CD4-positive, alpha-beta T cell (primary cell): ENCODE measurements at regions of chr13 and their contacts with region 1.

Region 1: GRCh38 chr13:98509271-98510155 is 67.4 kb downstream of the STK24 start:
- DNase-seq: peak in 9 of 14 experiments; percentile 15 to 80 (median 36)
- ATAC-seq: peak; percentile 71
- H3K4me3 ChIP-seq: no peak overlapping the region
- H3K4me3 Mint-ChIP-seq: peak overlapping the region; percentile 4
- H3K27ac ChIP-seq: peak overlapping the region in 1 of 2 donors; percentile 9
- H3K27ac Mint-ChIP-seq: peak overlapping the region; percentile 82
- H3K4me1 ChIP-seq: peaks cover 68% of the 10 kb centered on the region
- H3K4me1 Mint-ChIP-seq: peaks cover 96% of the 10 kb centered on the region
- H3K27me3 ChIP-seq: no peaks in the 10 kb centered on the region
- H3K27me3 Mint-ChIP-seq: no peaks in the 10 kb centered on the region
- CTCF ChIP-seq: no peak

Region 2: GRCh38 chr13:98428256-98428966 is 81.1 kb before region 1 on chr13:
- CTCF ChIA-PET with region 1: no interaction called
- POLR2A ChIA-PET with region 1: no interaction called
- intact Hi-C with region 1: no loop called
- DNase-seq: no peak
- ATAC-seq: no peak
- H3K4me3 ChIP-seq: no peak overlapping the region
- H3K4me3 Mint-ChIP-seq: no peak overlapping the region
- H3K27ac ChIP-seq: no peak overlapping the region
- H3K27ac Mint-ChIP-seq: no peak overlapping the region
- H3K4me1 ChIP-seq: no peaks in the 10 kb centered on the region
- H3K4me1 Mint-ChIP-seq: no peaks in the 10 kb centered on the region
- H3K27me3 ChIP-seq: peaks cover 0 to 8% of the 10 kb centered on the region in 2 experiments
- H3K27me3 Mint-ChIP-seq: peaks cover 27% of the 10 kb centered on the region
- CTCF ChIP-seq: no peak

Region 3: DNA sequence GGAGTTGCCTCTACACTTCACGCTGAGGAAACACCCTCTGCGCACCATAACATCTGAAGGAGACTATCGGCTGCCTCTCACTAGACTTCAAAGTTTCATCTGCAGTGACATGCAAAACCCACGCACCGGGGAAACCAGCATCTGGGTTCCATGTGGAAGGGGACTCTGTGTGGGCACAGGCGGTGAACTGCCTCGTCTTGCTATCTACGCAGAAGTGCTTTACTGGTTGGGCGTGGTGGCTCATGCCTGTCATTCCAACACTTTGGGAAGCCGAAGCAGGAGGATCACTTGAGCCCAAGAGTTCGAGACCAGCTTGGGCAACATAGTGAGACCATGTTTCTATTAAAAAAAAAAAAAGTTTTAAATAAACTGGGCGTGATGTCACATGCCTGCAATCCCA is 49.0 kb before region 1 on chr13:
- CTCF ChIA-PET with region 1: no interaction called
- POLR2A ChIA-PET with region 1: no interaction called
- intact Hi-C with region 1: no loop called
- DNase-seq: no peak
- ATAC-seq: no peak
- H3K4me3 ChIP-seq: no peak overlapping the region
- H3K4me3 Mint-ChIP-seq: no peak overlapping the region
- H3K27ac ChIP-seq: no peak overlapping the region
- H3K27ac Mint-ChIP-seq: peak overlapping the region; percentile 68
- H3K4me1 ChIP-seq: no peaks in the 10 kb centered on the region
- H3K4me1 Mint-ChIP-seq: peaks cover 11% of the 10 kb centered on the region
- H3K27me3 ChIP-seq: no peaks in the 10 kb centered on the region
- H3K27me3 Mint-ChIP-seq: no peaks in the 10 kb centered on the region
- CTCF ChIP-seq: no peak

Region 4: DNA sequence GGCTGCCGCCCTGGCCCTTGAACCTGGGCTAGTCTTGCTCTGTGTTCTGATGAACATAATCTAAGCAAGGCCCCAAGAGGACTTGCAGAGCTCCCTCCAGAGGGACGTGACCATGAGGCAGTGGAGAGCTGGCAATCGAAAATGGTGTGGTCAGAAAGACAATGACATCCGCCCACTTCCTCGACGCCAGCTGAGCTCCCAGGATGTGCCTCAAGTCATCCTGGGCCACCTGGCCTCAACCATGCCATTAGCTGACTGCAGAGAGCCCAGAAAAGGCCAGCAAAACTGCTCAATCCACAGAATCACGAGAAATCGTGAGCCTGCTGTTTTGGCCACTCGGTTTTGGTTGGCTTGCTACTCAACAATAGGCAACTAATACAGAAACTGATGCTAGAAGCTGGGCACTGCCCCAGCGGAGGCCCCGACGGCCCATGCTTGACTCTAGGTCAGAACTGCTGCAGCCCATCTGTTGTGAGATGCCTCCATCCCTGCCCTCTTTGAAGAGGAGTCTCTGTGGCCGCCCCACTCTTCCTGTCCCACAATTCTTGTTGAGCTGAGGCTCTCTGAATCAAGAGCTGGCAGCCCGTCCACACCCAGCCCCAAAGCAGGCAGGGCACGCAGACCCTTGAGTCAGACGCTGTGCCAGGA is 14.1 kb after region 1 on chr13:
- CTCF ChIA-PET with region 1: no interaction called
- POLR2A ChIA-PET with region 1: no interaction called
- intact Hi-C with region 1: loop called in 1 of 2 experiments (anchors 2 kb)
- DNase-seq: peak in 1 of 14 experiments; percentile 25
- ATAC-seq: no peak
- H3K4me3 ChIP-seq: no peak overlapping the region
- H3K4me3 Mint-ChIP-seq: peak overlapping the region; percentile 17
- H3K27ac ChIP-seq: peak overlapping the region; percentile 5 to 51
- H3K27ac Mint-ChIP-seq: peak overlapping the region; percentile 86
- H3K4me1 ChIP-seq: peaks cover 89% of the 10 kb centered on the region
- H3K4me1 Mint-ChIP-seq: peaks cover 92% of the 10 kb centered on the region
- H3K27me3 ChIP-seq: no peaks in the 10 kb centered on the region
- H3K27me3 Mint-ChIP-seq: no peaks in the 10 kb centered on the region
- CTCF ChIP-seq: no peak

Region 5: DNA sequence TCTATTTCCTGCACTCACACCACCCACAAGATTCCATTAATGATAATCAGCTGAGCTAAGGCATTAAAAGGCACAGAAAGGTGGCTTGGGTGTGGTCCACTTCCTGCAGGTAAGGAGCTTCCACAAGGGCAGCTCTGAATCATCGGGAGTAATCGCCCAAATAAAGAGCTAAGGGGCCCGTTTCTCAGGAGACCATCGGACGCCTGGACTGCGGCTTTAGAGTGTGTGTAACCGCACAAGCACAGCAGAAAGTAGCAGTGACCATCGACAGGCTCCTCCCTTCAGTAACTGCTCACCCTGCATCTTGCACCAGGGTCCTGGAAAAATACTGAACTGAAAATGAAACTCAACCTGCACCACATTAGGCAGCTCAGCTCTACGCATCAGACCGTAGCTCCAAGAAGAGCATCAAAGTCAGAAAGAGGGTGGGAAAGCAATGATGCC is 61.4 kb after region 1 on chr13:
- CTCF ChIA-PET with region 1: no interaction called
- POLR2A ChIA-PET with region 1: interaction called, 3 read pairs
- intact Hi-C with region 1: loop called in 1 of 2 experiments (anchors 5 kb)
- DNase-seq: peak in 7 of 14 experiments; percentile 21 to 80 (median 52)
- ATAC-seq: peak; percentile 59
- H3K4me3 ChIP-seq: peak overlapping the region; percentile 59
- H3K4me3 Mint-ChIP-seq: peak overlapping the region; percentile 92
- H3K27ac ChIP-seq: peak overlapping the region; percentile 55 to 71
- H3K27ac Mint-ChIP-seq: peak overlapping the region; percentile 93
- H3K4me1 ChIP-seq: peaks cover 69% of the 10 kb centered on the region
- H3K4me1 Mint-ChIP-seq: peaks cover 99% of the 10 kb centered on the region
- H3K27me3 ChIP-seq: no peaks in the 10 kb centered on the region
- H3K27me3 Mint-ChIP-seq: no peaks in the 10 kb centered on the region
- CTCF ChIP-seq: no peak